PC-9 (cell line): ENCODE measurements at regions of chr7 and their contacts with region 1.

Region 1: DNA sequence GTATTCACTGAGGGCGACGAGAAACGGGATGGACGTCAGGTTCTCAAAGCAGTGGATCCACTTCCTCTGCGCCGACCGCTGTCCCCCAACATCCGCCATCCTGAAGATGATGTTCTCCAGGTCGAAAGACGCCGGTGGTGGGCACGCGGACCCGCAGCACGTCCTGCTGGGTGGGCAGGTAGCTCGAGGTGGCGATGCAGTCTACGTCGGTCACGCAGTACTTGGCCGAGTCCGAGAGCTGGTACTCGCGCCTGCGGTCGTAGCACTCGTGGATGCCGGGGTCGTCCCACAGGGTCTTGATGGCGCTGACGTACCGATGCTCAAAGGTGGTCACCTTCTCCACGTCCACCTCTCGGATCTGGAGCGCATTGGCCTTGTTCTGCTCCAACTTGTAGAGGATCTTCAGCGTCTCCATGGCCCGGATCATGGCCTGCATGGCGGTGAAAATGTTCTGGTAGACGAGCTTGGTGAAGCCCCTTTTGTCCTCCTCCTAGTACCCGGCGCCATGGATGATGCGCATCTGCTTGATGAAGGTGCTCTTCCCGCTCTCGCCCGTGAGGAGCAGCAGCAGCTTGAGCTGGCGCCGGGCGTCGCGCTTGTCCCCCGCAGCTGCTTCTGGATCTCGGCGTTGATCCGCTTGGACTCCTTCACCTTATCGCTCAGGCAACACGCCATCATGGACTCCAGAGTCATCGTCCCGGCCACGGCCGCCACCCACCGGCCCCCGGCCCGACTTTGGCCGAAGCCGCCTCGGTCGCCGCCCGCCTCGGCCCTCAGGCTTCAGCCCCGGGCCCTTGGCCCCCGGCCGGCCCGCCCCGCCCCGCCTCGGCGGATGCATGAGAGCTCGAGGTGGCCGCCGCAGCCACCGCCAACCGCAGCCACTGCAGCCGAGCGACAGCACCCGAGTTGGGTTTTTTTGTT is 122.9 kb upstream of the KCTD7 start:
- DNase-seq: peak in 1 of 2 experiments; percentile 28
- H3K4me3 ChIP-seq: no peak overlapping the region
- H3K27ac ChIP-seq: no peak overlapping the region
- H3K4me1 ChIP-seq: no peaks in the 10 kb centered on the region
- H3K27me3 ChIP-seq: no peaks in the 10 kb centered on the region
- CTCF ChIP-seq: no peak

Region 2: DNA sequence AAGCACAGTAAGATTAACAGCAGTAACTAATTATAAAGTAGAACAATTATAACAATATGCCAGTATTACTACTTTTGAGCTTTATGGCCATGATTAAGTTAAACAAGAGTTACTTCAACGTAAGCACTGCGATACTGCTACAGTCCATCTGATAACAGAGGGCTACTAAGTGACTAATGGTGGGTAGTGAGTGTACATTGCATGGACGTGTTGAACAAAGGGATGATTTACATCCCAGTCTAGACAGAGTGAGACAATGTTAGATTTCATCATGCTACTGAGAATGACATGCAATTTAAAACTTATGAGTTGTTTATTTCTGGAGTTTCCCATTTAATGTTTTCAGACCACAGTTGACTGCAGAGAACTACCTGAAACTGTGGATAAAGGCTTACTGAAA is 255.1 kb before region 1 on chr7:
- CTCF ChIA-PET with region 1: no interaction called
- POLR2A ChIA-PET with region 1: interaction called, 17 read pairs
- intact Hi-C with region 1: no loop called
- DNase-seq: no peak
- H3K4me3 ChIP-seq: no peak overlapping the region
- H3K27ac ChIP-seq: no peak overlapping the region
- H3K4me1 ChIP-seq: no peaks in the 10 kb centered on the region
- H3K27me3 ChIP-seq: no peaks in the 10 kb centered on the region
- CTCF ChIP-seq: no peak

Region 3: GRCh38 chr7:66413379-66414114 is 92.2 kb before region 1 on chr7:
- CTCF ChIA-PET with region 1: no interaction called
- POLR2A ChIA-PET with region 1: no interaction called
- intact Hi-C with region 1: no loop called
- DNase-seq: peak; percentile 66 to 67
- H3K4me3 ChIP-seq: peak overlapping the region; percentile 55
- H3K27ac ChIP-seq: no peak overlapping the region
- H3K4me1 ChIP-seq: peaks cover 10% of the 10 kb centered on the region
- H3K27me3 ChIP-seq: no peaks in the 10 kb centered on the region
- CTCF ChIP-seq: peak; percentile 52; the same call in 1 of the 2 replicates

Region 4: GRCh38 chr7:66557608-66558143 is 51.9 kb after region 1 on chr7:
- CTCF ChIA-PET with region 1: no interaction called
- POLR2A ChIA-PET with region 1: no interaction called
- intact Hi-C with region 1: no loop called
- DNase-seq: peak in 1 of 2 experiments; percentile 62
- H3K4me3 ChIP-seq: no peak overlapping the region
- H3K27ac ChIP-seq: no peak overlapping the region
- H3K4me1 ChIP-seq: no peaks in the 10 kb centered on the region
- H3K27me3 ChIP-seq: no peaks in the 10 kb centered on the region
- CTCF ChIP-seq: peak; percentile 97